HAP-1 (cell line): ENCODE measurements at regions of chrX and their contacts with region 1.

Region 1: GRCh38 chrX:71292669-71293365 is 8.7 kb upstream of the ITGB1BP2 start:
- DNase-seq: no peak
- H3K4me3 ChIP-seq: no peak overlapping the region
- H3K4me1 ChIP-seq: peaks cover 3% of the 10 kb centered on the region; the same call in 1 of the 2 replicates
- H3K27me3 ChIP-seq: no peaks in the 10 kb centered on the region

Region 2: DNA sequence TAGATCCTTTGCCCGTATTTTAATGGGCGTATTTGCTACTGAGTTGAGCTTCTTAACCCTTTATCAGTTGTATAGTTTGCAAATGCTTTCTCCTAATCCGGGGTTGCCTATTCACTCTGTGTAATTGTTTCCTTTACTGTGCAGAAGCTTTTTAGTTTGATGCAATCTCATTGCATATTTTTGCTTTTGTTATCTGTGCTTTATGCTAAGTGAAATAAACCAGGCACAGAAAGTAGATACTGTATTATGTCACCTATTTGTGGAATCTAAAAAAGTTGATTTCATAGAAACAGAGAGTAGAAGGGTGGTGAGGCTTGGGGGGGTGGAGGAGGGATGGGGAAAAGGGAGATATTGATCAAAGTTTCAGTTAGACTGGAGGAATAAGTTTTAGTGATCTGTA is 257.8 kb after region 1 on chrX:
- in situ Hi-C with region 1: loop called (anchors 10 kb)
- DNase-seq: peak in 1 of 2 experiments; percentile 86
- H3K4me3 ChIP-seq: no peak overlapping the region
- H3K4me1 ChIP-seq: peaks cover 31% of the 10 kb centered on the region
- H3K27me3 ChIP-seq: no peaks in the 10 kb centered on the region